Ascending aorta (tissue), 2 donors: ENCODE measurements at regions of chr4 and their contacts with region 1.

Region 1: GRCh38 chr4:24488399-24489164 is 95.8 kb downstream of the DHX15 start:
- DNase-seq: peak in 1 of 2 donors; percentile 83
- H3K4me3 ChIP-seq: no peak overlapping the region
- H3K27ac ChIP-seq: no peak overlapping the region
- H3K4me1 ChIP-seq: no peaks in the 10 kb centered on the region
- H3K27me3 ChIP-seq: no peaks in the 10 kb centered on the region
- CTCF ChIP-seq: peak; percentile 55 to 82 (median 62)

Region 2: DNA sequence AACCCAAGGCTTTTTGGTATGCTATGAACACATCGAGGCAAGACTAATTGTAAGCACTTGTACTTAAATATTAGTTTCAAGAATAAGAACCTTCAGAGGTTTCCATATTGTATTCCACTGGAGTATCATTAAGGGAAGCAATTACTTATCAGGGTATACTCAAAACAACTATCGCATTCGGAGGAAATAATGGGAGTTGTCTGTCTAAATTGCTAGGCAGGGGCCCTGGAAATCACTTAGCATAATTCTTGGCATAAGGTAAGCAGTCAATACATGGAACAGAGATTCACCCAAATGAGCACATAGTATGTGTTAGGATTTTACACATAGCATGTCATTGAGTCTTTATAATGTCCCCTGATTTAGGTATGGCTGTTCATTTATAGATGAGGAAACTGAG is 153.7 kb before region 1 on chr4:
- intact Hi-C with region 1: no loop called
- DNase-seq: no peak
- H3K4me3 ChIP-seq: no peak overlapping the region
- H3K27ac ChIP-seq: no peak overlapping the region
- H3K4me1 ChIP-seq: no peaks in the 10 kb centered on the region
- H3K27me3 ChIP-seq: no peaks in the 10 kb centered on the region
- CTCF ChIP-seq: no peak

Region 3: GRCh38 chr4:24369507-24370029 is 119.0 kb before region 1 on chr4:
- intact Hi-C with region 1: no loop called
- DNase-seq: no peak
- H3K4me3 ChIP-seq: no peak overlapping the region
- H3K27ac ChIP-seq: no peak overlapping the region
- H3K4me1 ChIP-seq: no peaks in the 10 kb centered on the region
- H3K27me3 ChIP-seq: no peaks in the 10 kb centered on the region
- CTCF ChIP-seq: no peak

Region 4: GRCh38 chr4:24382381-24382780 is 106.2 kb before region 1 on chr4:
- intact Hi-C with region 1: no loop called
- DNase-seq: no peak
- H3K4me3 ChIP-seq: no peak overlapping the region
- H3K27ac ChIP-seq: no peak overlapping the region
- H3K4me1 ChIP-seq: no peaks in the 10 kb centered on the region
- H3K27me3 ChIP-seq: no peaks in the 10 kb centered on the region
- CTCF ChIP-seq: no peak

Region 5: GRCh38 chr4:25144870-25145481 is 656.4 kb after region 1 on chr4:
- intact Hi-C with region 1: loop called (anchors 5 kb)
- DNase-seq: no peak
- H3K4me3 ChIP-seq: no peak overlapping the region
- H3K27ac ChIP-seq: no peak overlapping the region
- H3K4me1 ChIP-seq: no peaks in the 10 kb centered on the region
- H3K27me3 ChIP-seq: no peaks in the 10 kb centered on the region
- CTCF ChIP-seq: peak; percentile 18 to 56 (median 48)